ENCODE measurements at regions of chr15 and their contacts with region 1.

Region 1: DNA sequence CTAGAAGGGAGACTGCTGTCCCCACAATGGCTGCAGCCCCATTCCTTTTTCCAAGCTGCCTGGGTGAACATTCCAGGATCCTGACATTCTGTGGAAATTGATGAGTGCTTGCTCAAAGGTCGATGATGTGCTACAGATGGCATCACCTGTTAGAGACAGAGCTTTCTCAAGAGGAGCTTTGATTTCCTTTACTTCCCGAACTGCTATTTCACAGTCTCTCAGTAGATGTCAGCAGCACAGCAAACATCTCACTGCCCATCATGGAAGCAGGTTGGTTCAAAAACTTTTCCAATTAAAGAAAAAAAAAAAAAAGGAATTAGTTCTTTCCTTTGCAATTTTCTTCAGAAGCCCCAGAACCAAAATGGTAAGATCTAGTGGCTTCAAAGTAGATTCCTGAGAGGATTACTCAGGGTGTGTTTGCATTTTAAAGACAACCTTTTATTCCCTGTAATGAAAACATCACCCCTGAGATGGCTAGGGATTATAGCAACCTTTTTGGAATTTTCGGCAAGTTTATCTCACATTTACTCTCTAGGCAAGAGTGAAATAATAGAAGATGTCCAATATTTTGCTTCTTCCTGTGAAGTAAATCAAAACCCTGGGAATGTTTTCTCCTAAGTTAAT is 44.8 kb downstream of the POLR2M start:
- DNase-seq: peak; percentile 15

Region 2: GRCh38 chr15:57680021-57680420 is 71.3 kb before region 1 on chr15:
- CTCF ChIA-PET with region 1: no interaction called
- POLR2A ChIA-PET with region 1: no interaction called
- DNase-seq: no peak

Region 3: GRCh38 chr15:57861036-57861638 is 109.8 kb after region 1 on chr15:
- CTCF ChIA-PET with region 1: interaction called, 16 read pairs
- POLR2A ChIA-PET with region 1: no interaction called
- DNase-seq: peak; percentile 33

Measured in HEK293T (cell line).